HEK293 (cell line): ENCODE measurements at regions of chr6 and their contacts with region 1.

Region 1: DNA sequence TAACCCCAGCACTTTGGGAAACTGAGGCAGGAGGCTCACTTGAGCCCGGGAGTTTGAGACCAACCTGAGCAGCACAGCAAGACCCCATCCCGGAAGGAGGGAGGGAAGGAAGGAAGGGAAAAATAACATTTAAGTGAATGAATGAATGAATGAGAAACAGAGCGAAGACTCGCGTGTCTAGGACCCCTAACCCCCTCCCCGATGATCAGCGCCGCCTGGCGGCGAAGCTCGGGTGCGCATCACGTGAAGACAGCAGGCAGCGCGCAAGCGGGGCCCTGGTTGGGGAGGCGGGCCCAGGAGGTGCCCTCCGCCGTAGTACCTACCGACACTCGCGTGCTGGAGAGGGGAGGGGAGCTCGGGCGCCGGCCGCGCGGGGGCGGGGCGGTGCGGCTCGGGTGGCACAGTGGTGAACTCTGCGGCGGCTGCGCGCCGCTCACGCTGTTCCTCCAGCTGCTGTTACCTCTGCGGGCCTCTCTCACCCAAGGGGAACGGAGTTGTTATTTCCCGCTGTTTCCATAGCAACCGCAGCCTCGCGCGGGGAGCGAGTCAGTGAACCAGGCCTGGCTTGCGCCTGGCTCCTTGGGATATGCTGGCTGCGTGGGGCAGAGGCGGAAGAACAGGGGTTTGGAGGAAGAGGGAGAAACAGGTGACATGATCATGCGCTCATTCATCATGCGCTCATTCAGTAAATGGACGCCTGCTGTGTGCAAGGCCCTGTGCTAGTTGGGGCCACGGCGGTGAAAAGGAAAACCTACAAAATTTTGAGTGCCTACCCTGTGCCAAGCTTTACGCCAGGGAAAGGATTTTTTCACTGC is 2.0 kb upstream of the DCDC2 start:
- H3K4me3 ChIP-seq: peak overlapping the region; percentile 49
- H3K27ac ChIP-seq: peak overlapping the region; percentile 47; the same call in 1 of the 2 replicates
- H3K4me1 ChIP-seq: peaks cover 6% of the 10 kb centered on the region; the same call in 1 of the 2 replicates
- CTCF ChIP-seq: peak; percentile 98

Region 2: DNA sequence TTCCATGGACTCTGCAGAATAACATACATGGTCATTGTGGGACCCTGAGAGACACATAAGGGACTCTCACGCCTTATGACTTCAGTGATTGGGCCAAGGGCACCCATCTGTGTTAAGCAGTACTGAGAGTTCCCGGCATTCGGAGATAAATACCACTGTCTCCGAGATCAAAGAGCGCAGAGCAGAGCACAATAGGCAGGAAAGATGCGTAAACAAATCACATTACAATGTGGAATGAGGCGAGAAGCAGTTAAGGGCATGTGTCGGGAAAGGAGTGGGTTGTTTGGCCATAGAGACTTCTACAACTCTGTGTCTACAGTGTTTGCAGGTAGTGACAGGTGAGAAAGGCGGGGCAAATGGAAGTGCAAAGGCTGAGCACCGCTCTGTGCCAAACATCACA is 176.3 kb before region 1 on chr6:
- CTCF ChIA-PET with region 1: no interaction called
- POLR2A ChIA-PET with region 1: no interaction called
- H3K4me3 ChIP-seq: no peak overlapping the region
- H3K27ac ChIP-seq: no peak overlapping the region
- H3K4me1 ChIP-seq: peaks cover 8% of the 10 kb centered on the region
- CTCF ChIP-seq: no peak

Region 3: DNA sequence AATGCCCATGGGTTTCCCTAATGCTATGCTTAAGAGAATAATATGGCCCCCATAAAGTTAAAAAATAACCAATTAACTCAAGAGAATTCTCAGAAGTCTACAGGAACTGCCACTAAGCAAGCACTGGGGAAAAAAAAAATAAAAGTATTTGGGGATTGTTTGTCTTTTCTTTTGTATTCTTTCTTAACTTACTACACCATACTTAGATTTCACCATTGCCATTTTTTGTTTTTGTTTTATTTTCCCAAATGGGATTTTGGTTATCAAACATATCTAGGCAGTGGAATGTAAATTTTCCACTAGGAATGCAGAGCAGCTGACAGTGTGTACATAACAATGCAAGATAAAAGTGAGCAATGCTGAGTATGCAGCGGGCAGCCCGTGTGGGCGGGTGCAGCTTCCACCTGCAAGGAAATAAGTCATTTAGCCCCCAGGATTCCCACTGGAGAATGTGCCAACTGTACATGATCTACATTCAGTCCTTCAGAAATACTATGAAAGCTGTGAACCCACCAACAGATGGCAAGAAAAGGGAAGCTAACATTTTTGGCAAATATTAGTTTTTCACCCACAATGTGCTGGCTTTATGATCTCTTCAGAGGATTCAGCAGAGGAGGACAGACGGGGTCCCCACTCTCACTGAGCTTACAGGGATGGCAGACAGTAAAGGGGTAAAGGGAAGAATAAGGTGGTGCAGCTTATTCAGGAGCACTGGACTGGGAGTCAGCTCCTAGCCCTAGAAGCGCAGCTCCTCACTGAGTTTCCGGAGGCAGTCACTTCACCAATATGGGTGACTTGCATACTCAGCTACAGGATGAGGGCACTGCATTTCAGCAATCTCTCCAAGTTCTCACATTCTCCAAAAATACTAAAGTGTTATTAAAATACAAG is 46.4 kb before region 1 on chr6:
- CTCF ChIA-PET with region 1: interaction called, 10 read pairs
- POLR2A ChIA-PET with region 1: interaction called, 4 read pairs
- H3K4me3 ChIP-seq: no peak overlapping the region
- H3K27ac ChIP-seq: no peak overlapping the region
- H3K4me1 ChIP-seq: 0 out of 2 replicates have a peak, but pooled peaks cover 6% of the 10 kb centered on the region
- CTCF ChIP-seq: no peak

Region 4: GRCh38 chr6:24323632-24324337 is 36.1 kb before region 1 on chr6:
- CTCF ChIA-PET with region 1: interaction called, 8 read pairs
- POLR2A ChIA-PET with region 1: interaction called, 15 read pairs
- H3K4me3 ChIP-seq: no peak overlapping the region
- H3K27ac ChIP-seq: no peak overlapping the region
- H3K4me1 ChIP-seq: peaks cover 26% of the 10 kb centered on the region
- CTCF ChIP-seq: no peak

Region 5: GRCh38 chr6:24385536-24386269 is 25.9 kb after region 1 on chr6:
- CTCF ChIA-PET with region 1: interaction called, 20 read pairs
- POLR2A ChIA-PET with region 1: interaction called, 8 read pairs
- H3K4me3 ChIP-seq: no peak overlapping the region
- H3K27ac ChIP-seq: no peak overlapping the region
- H3K4me1 ChIP-seq: no peaks in the 10 kb centered on the region; the same call in 1 of the 2 replicates
- CTCF ChIP-seq: no peak

Region 6: GRCh38 chr6:24394780-24395437 is 35.1 kb after region 1 on chr6:
- CTCF ChIA-PET with region 1: interaction called, 20 read pairs
- POLR2A ChIA-PET with region 1: no interaction called
- H3K4me3 ChIP-seq: no peak overlapping the region
- H3K27ac ChIP-seq: no peak overlapping the region
- H3K4me1 ChIP-seq: no peaks in the 10 kb centered on the region
- CTCF ChIP-seq: no peak